Heart left ventricle (tissue), 16 donors: ENCODE measurements at regions of chr12 and their contacts with region 1.

Region 1: GRCh38 chr12:108856428-108857157 is 790 bp downstream of the SSH1 start:
- DNase-seq: peak; percentile 80 to 93 (median 86)
- ATAC-seq: peak; percentile 41 to 63 (median 60)
- H3K4me3 ChIP-seq: peak overlapping the region; percentile 62 to 98 (median 88)
- H3K27ac ChIP-seq: peak overlapping the region; percentile 86 to 99 (median 96)
- H3K4me1 ChIP-seq: peaks cover 12 to 82% (median 57%) of the 10 kb centered on the region in 12 donors
- H3K27me3 ChIP-seq: no peaks in the 10 kb centered on the region
- CTCF ChIP-seq: no peak
- POLR2A ChIP-seq: peak in 1 of 2 donors; percentile 44

Region 2: GRCh38 chr12:108514973-108515814 is 341.4 kb before region 1 on chr12 and contains the start of gene FICD:
- intact Hi-C with region 1: no loop called
- DNase-seq: peak; percentile 100
- ATAC-seq: peak; percentile 95 to 98 (median 96)
- H3K4me3 ChIP-seq: peak within 1 kb of the TSS; percentile 61 to 97 (median 86)
- H3K27ac ChIP-seq: peak within 1 kb of the TSS in 11 of 12 donors; percentile 59 to 85 (median 76)
- H3K4me1 ChIP-seq: peaks cover 0 to 26% (median 10%) of the 10 kb centered on the region in 12 donors
- H3K27me3 ChIP-seq: no peaks in the 10 kb centered on the region
- CTCF ChIP-seq: no peak
- POLR2A ChIP-seq: peak in 1 of 2 donors; percentile 71
- total RNA-seq, gene FICD: 2.6 to 6.6 (median 3.5) TPM

Region 3: GRCh38 chr12:108562348-108563135 is 294.1 kb before region 1 on chr12 and contains the start of gene ISCU:
- intact Hi-C with region 1: loop called in 3 of 10 experiments (anchors 2 to 5 kb)
- DNase-seq: peak; percentile 97 to 100 (median 98)
- ATAC-seq: peak; percentile 84 to 90 (median 88)
- H3K4me3 ChIP-seq: peak within 1 kb of the TSS; percentile 67 to 100 (median 89)
- H3K27ac ChIP-seq: peak within 1 kb of the TSS; percentile 84 to 98 (median 95)
- H3K4me1 ChIP-seq: peaks cover 7 to 81% (median 56%) of the 10 kb centered on the region in 12 donors
- H3K27me3 ChIP-seq: no peaks in the 10 kb centered on the region
- CTCF ChIP-seq: no peak
- POLR2A ChIP-seq: peak; percentile 86 to 98
- total RNA-seq, gene ISCU: 289 to 632 (median 497) TPM

Region 4: DNA sequence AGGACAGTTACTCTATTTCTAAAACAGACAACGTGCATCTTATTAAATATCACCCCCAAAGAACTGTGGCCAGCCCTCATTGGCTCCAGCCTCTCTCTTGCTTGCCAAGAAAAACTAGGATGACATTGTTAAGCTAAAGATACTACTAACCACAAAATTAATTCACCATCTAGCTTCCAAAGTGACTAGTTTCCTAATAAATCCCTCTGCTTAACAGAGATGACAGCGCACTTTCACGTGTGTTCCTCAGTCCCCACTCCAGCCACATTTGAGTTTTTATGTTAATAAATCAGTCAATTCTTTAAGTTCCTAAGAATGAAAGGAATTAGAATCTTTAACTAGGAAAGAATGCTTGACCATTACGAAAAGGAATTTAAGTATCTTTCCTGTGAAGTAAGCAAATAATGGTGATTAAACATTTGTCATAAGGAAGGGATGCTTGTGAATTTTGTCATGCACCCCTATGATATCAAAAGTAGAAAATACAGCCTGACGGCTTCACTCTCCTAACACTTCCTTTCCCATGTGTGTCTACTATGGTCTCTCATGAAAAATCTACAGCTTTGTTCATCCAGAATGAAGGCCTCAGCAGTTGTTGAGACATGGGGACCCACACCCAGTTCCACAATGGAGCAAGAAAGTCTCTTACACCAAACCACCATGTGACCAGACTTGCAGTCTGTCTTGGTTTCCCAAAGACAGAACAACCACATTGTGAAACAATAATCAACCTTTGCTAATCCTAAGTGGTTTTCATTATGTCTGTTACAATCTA is 133.4 kb before region 1 on chr12:
- intact Hi-C with region 1: loop called in 2 of 10 experiments (anchors 10 kb)
- DNase-seq: no peak
- ATAC-seq: peak in 3 of 4 donors; percentile 45 to 73 (median 52)
- H3K4me3 ChIP-seq: peak overlapping the region in 1 of 12 donors; percentile 1
- H3K27ac ChIP-seq: peak overlapping the region in 11 of 12 donors; percentile 35 to 79 (median 55)
- H3K4me1 ChIP-seq: peaks cover 10 to 91% (median 68%) of the 10 kb centered on the region in 12 donors
- H3K27me3 ChIP-seq: no peaks in the 10 kb centered on the region
- CTCF ChIP-seq: no peak
- POLR2A ChIP-seq: no peak

Region 5: DNA sequence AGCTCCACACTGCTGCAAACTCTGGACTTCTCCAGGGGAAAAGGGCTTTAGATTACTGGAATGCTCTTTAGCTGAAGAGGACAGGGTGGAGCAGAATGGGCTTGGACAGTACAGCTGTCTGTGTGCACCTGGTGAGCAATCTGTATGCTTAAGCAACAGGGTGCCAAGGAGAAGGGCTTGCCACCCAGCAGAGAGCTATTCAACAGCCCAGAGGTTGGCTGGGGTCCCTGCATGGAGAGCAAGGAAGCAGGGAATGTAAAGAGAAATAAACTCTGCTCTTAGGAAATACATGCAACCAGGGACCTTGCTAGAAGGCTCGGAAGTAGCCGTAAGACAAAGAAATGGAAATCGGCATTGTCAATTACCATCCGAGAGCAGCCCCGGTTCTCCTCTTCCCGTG is 72.3 kb before region 1 on chr12:
- intact Hi-C with region 1: no loop called
- DNase-seq: no peak
- ATAC-seq: peak in 2 of 4 donors; percentile 2 to 3
- H3K4me3 ChIP-seq: no peak overlapping the region
- H3K27ac ChIP-seq: peak overlapping the region; percentile 2 to 84 (median 59)
- H3K4me1 ChIP-seq: peaks cover 11 to 84% (median 62%) of the 10 kb centered on the region in 12 donors
- H3K27me3 ChIP-seq: no peaks in the 10 kb centered on the region
- CTCF ChIP-seq: no peak
- POLR2A ChIP-seq: no peak

Region 6: DNA sequence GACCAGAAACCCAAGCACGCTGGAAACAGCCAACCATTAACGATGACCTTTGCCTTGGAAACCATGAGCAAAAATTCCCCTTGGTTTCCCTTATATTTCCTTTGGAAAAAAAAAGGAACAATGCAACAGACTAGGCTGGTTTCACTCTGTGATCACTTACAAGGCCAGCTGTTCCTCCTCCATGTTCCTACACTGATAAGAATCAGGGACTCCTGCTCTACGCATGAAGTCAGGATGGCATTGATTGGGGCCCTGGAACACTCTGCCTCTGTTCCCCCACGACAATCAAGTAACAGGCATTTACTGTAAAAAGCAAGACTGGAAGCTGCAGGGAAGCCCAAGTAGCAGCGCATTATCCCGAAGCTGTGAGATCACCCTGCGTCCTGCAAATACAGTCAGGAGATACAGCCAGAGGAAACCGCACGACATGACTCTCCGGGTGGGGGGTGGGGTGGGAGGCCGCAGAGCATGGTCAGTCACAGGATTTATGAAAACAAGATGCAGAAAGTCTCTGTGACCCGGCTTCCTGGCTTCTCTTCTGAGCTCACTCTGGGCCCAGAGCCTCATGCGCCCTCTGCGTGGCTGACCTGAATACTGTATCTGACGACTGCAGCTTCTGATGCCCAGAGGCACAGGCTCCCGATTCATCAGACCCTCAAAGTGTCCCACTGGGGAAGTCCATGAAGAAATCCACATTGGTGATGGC is 30.3 kb before region 1 on chr12:
- intact Hi-C with region 1: loop called in 1 of 10 experiments (anchors 2 kb)
- DNase-seq: peak; percentile 75 to 81 (median 80)
- ATAC-seq: peak; percentile 62 to 77 (median 66)
- H3K4me3 ChIP-seq: peak overlapping the region in 9 of 12 donors; percentile 15 to 36 (median 24)
- H3K27ac ChIP-seq: peak overlapping the region; percentile 83 to 94 (median 91)
- H3K4me1 ChIP-seq: peaks cover 40 to 94% (median 84%) of the 10 kb centered on the region in 12 donors
- H3K27me3 ChIP-seq: no peaks in the 10 kb centered on the region
- CTCF ChIP-seq: peak in 3 of 12 donors; percentile 10 to 29 (median 27)
- POLR2A ChIP-seq: peak in 1 of 2 donors; percentile 11

Region 7: GRCh38 chr12:108838194-108839017 is 18.2 kb before region 1 on chr12:
- intact Hi-C with region 1: loop called in 2 of 10 experiments (anchors 2 kb)
- DNase-seq: peak; percentile 90 to 97 (median 94)
- ATAC-seq: peak; percentile 91 to 96 (median 94)
- H3K4me3 ChIP-seq: no peak overlapping the region
- H3K27ac ChIP-seq: peak overlapping the region; percentile 75 to 96 (median 93)
- H3K4me1 ChIP-seq: peaks cover 44 to 98% (median 91%) of the 10 kb centered on the region in 12 donors
- H3K27me3 ChIP-seq: no peaks in the 10 kb centered on the region
- CTCF ChIP-seq: no peak
- POLR2A ChIP-seq: peak in 1 of 2 donors; percentile 87

Region 8: GRCh38 chr12:108890212-108890611 is 33.6 kb after region 1 on chr12:
- intact Hi-C with region 1: no loop called
- DNase-seq: no peak
- ATAC-seq: no peak
- H3K4me3 ChIP-seq: no peak overlapping the region
- H3K27ac ChIP-seq: no peak overlapping the region
- H3K4me1 ChIP-seq: no peaks in the 10 kb centered on the region
- H3K27me3 ChIP-seq: no peaks in the 10 kb centered on the region
- CTCF ChIP-seq: no peak
- POLR2A ChIP-seq: no peak